ENCODE measurements at regions of chr10 and their contacts with region 1.

Region 1: DNA sequence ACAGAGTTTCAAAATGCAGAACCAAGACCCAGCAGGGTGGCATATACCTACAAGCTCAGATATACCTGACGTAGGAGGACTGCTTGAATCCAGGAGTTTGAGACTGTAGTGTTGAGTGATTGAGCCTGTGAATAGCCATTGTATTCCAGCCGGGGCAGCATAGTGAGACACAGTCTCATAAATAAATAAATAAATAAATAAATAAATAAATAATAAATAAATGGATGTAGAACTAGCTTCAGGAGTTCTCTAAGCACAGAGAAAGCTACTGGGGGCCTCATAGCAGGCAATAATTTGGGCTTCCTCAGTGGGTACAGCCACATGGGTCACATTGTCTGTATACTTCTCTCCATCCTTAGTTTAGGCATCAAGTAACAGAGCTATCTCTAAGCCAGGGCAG is 906.8 kb downstream of the LRMDA start:
- DNase-seq: no peak
- H3K4me3 ChIP-seq: no peak overlapping the region
- H3K27ac ChIP-seq: no peak overlapping the region
- H3K4me1 ChIP-seq: no peaks in the 10 kb centered on the region
- CTCF ChIP-seq: no peak

Region 2: DNA sequence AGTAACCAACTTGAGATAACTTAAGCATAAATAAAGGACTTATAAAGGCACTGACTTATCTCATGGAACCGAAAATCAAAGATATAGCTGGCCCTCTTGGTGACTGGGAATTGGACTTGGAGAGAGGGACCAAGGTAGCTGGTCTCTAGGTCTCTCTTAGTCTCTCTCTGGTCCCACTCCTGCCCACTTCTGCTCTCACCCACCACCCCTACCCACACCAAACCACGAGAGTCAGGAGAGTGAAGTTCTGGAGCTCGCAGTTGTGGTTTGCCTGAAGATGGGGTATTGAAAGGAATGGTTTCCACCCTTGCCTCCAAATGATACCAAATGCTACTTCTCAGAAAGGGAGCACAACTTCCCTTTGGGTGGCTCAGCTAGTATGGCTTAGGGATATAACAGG is 690.5 kb before region 1 on chr10:
- CTCF ChIA-PET with region 1: no interaction called
- POLR2A ChIA-PET with region 1: interaction called, 10 read pairs
- intact Hi-C with region 1: no loop called
- DNase-seq: no peak
- H3K4me3 ChIP-seq: no peak overlapping the region
- H3K27ac ChIP-seq: no peak overlapping the region
- H3K4me1 ChIP-seq: no peaks in the 10 kb centered on the region
- CTCF ChIP-seq: no peak

Region 3: DNA sequence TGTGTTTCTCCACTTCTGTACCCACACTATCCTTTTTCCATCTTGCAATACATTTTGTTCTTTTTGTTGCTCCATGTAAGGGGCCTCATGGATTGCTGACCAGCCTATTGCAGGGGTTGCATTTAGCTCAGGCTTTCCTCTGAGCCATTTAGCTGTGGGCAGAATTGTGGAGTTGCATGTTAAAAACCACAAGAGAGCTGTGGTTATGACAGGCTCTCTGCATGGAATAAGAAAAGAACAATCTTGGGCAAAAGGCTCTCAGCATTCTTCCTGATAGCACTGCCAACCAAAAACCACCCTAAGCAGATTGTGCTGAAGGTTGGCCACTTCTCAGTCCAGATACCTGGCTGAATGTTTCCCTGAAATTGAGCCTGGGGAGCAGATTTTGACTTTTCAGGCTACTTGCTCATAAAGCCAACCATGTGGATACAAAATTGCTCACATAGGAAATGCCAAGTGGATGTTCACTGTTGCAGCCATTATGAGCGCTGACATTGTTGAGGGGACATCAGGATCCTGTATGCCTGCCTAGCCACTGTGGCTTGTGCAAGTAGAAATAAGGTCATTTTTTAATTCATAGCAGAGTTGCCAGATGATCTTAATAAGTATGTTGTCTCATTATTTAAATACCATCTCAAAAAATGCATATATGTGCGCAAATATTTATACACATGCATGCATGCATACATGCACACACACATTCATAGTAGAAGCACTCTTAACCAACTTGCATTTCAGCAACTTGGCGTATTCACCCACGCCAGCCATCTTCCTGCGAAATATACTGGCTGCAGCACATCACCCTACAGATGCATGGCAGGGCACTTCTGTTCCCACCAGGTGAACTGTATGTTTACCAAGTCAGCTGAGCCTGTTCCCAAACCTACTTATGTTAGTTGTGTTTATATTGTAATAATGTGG is 211.3 kb before region 1 on chr10:
- CTCF ChIA-PET with region 1: no interaction called
- POLR2A ChIA-PET with region 1: no interaction called
- intact Hi-C with region 1: no loop called
- DNase-seq: no peak
- H3K4me3 ChIP-seq: no peak overlapping the region
- H3K27ac ChIP-seq: no peak overlapping the region
- H3K4me1 ChIP-seq: no peaks in the 10 kb centered on the region
- CTCF ChIP-seq: no peak

Region 4: GRCh38 chr10:76717141-76717540 is 379.0 kb after region 1 on chr10:
- CTCF ChIA-PET with region 1: no interaction called
- POLR2A ChIA-PET with region 1: no interaction called
- intact Hi-C with region 1: no loop called
- DNase-seq: no peak
- H3K4me3 ChIP-seq: no peak overlapping the region
- H3K27ac ChIP-seq: no peak overlapping the region
- H3K4me1 ChIP-seq: no peaks in the 10 kb centered on the region
- CTCF ChIP-seq: no peak

Measured in OCI-LY7 (cell line).